ENCODE measurements at regions of chr18 and their contacts with region 1.

Region 1: GRCh38 chr18:76803814-76804213 is 18.5 kb upstream of the ZNF236 start:
- DNase-seq: peak; percentile 76
- ATAC-seq: peak; percentile 66
- H3K4me3 ChIP-seq: no peak overlapping the region
- H3K4me3 Mint-ChIP-seq: peak overlapping the region; percentile 56
- H3K27ac ChIP-seq: no peak overlapping the region
- H3K27ac Mint-ChIP-seq: no peak overlapping the region
- H3K4me1 ChIP-seq: peaks cover 15 to 19% of the 10 kb centered on the region in 2 donors
- H3K4me1 Mint-ChIP-seq: peaks cover 13% of the 10 kb centered on the region
- H3K27me3 ChIP-seq: peaks cover 0 to 9% (median 2%) of the 10 kb centered on the region in 4 experiments
- H3K27me3 Mint-ChIP-seq: peaks cover 5% of the 10 kb centered on the region
- CTCF ChIP-seq: peak; percentile 90

Region 2: DNA sequence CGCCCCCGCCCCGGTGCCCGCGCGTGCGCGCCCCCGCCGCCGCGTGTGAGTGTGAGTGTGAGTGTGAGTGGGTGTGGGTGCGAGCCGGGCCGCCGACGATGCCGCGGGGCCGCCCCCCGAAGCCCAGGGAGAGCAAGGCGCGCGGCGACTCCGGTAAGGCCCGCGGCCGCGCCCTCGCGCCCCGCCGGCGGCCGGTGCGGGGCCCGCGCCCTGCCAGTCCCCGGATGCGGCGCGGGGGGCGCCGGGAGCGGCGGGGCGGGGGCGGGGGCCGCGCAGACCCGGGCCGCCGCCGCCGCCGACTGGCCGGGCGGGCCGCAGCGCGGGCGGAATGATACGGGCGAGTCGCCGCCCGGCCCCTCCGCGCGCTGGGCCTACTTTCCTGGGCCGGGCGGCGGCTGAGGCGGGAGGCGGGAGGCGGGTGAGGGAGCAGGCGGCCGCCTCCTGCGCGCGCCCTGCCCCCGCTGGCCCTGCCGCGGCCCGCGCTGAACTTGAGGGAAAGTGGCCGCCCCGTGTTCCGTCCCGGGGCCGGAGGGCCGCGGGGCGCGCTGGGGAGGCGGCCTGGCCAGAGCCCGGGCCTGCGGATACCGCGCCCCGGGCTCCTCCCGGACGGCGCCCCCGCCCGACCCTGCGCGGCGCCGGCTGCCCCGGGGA is 18.8 kb after region 1 on chr18 and contains the start of gene ZNF236:
- CTCF ChIA-PET with region 1: interaction called, 61 read pairs
- POLR2A ChIA-PET with region 1: interaction called, 7 read pairs
- intact Hi-C with region 1: loop called (anchors 1 kb)
- DNase-seq: peak; percentile 89
- ATAC-seq: peak; percentile 60
- H3K4me3 ChIP-seq: peak within 1 kb of the TSS; percentile 75 to 98 (median 95)
- H3K4me3 Mint-ChIP-seq: peak within 1 kb of the TSS; percentile 95
- H3K27ac ChIP-seq: peak within 1 kb of the TSS; percentile 85 to 90
- H3K27ac Mint-ChIP-seq: peak within 1 kb of the TSS; percentile 97
- H3K4me1 ChIP-seq: peaks cover 19 to 45% of the 10 kb centered on the region in 2 donors
- H3K4me1 Mint-ChIP-seq: peaks cover 60% of the 10 kb centered on the region
- H3K27me3 ChIP-seq: no peaks in the 10 kb centered on the region
- H3K27me3 Mint-ChIP-seq: no peaks in the 10 kb centered on the region
- CTCF ChIP-seq: no peak
- total RNA-seq, gene ZNF236: 39.2 and 39.5 TPM in 2 replicates

Region 3: DNA sequence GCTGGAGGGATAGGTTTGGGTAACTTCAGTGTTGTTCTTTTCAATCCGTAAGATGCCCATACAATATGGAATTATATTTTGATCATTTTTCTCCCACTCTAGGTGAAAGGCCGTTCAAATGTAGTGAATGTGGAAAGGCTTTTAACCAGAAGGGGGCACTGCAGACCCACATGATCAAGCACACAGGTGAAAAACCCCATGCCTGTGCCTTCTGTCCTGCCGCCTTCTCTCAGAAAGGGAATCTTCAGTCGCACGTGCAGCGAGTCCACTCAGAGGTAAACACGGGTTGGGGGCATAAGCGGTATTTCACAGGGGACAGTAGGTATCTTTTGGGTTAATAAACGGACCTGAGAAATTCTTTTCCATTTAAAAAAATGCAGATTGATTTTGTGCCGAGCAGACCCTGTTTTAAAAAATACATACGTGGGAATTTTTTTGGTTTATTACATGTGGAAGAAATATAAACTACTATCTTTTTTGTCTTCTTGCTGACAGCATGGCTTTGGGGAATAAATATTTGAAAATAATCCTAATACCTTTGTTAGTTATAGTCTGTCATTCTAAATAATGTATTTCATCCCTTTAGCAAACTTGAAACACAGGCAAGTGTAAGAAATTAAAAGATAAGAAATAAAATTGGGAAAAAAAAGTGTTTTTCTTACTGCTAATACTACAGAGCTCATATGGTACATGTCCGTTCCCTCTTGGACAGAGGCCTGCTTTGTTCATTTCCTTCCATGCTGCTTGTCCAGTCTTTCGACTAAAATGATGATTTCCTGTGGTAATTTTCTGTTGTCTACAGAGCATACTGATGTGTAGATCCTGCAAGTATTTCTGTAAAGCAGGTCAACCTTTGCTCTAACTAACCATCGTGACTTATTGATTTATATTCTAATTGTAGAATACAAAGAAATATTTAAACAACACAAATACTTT is 71.8 kb after region 1 on chr18:
- CTCF ChIA-PET with region 1: interaction called, 14 read pairs
- POLR2A ChIA-PET with region 1: no interaction called
- intact Hi-C with region 1: loop called (anchors 1 kb)
- DNase-seq: peak; percentile 61
- ATAC-seq: peak; percentile 53
- H3K4me3 ChIP-seq: no peak overlapping the region
- H3K4me3 Mint-ChIP-seq: no peak overlapping the region
- H3K27ac ChIP-seq: no peak overlapping the region
- H3K27ac Mint-ChIP-seq: no peak overlapping the region
- H3K4me1 ChIP-seq: no peaks in the 10 kb centered on the region
- H3K4me1 Mint-ChIP-seq: no peaks in the 10 kb centered on the region
- H3K27me3 ChIP-seq: no peaks in the 10 kb centered on the region
- H3K27me3 Mint-ChIP-seq: no peaks in the 10 kb centered on the region
- CTCF ChIP-seq: peak; percentile 76

Region 4: DNA sequence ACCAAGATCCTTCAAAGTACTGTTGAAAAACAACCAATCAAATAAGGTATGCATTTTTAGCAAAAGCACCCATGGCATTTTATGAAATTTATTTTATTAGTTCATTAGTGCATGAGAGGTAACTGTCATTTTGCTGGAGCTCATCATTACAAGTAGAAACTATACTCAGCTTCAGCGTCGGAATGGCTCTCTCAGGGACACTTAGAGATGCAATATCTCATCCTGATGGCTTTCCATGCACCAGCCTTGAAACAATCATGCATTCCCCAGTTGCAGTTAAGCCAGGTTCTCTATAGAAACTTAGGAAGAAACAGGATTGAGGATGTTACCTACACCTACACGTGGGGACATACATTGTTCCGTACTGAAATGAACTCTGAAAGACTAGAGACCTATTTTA is 665.3 kb after region 1 on chr18:
- CTCF ChIA-PET with region 1: interaction called, 14 read pairs
- POLR2A ChIA-PET with region 1: no interaction called
- intact Hi-C with region 1: loop called (anchors 2 kb)
- DNase-seq: no peak
- ATAC-seq: no peak
- H3K4me3 ChIP-seq: no peak overlapping the region
- H3K4me3 Mint-ChIP-seq: no peak overlapping the region
- H3K27ac ChIP-seq: no peak overlapping the region
- H3K27ac Mint-ChIP-seq: no peak overlapping the region
- H3K4me1 ChIP-seq: no peaks in the 10 kb centered on the region
- H3K4me1 Mint-ChIP-seq: no peaks in the 10 kb centered on the region
- H3K27me3 ChIP-seq: peaks cover 0 to 3% (median 0%) of the 10 kb centered on the region in 4 experiments
- H3K27me3 Mint-ChIP-seq: peaks cover 20% of the 10 kb centered on the region
- CTCF ChIP-seq: peak; percentile 1

Region 5: GRCh38 chr18:77702686-77703085 is 898.9 kb after region 1 on chr18:
- CTCF ChIA-PET with region 1: interaction called, 24 read pairs
- POLR2A ChIA-PET with region 1: no interaction called
- intact Hi-C with region 1: no loop called
- DNase-seq: peak; percentile 11
- ATAC-seq: no peak
- H3K4me3 ChIP-seq: no peak overlapping the region
- H3K4me3 Mint-ChIP-seq: no peak overlapping the region
- H3K27ac ChIP-seq: no peak overlapping the region
- H3K27ac Mint-ChIP-seq: no peak overlapping the region
- H3K4me1 ChIP-seq: no peaks in the 10 kb centered on the region
- H3K4me1 Mint-ChIP-seq: no peaks in the 10 kb centered on the region
- H3K27me3 ChIP-seq: no peaks in the 10 kb centered on the region
- H3K27me3 Mint-ChIP-seq: peaks cover 19% of the 10 kb centered on the region
- CTCF ChIP-seq: peak; percentile 29